Vagina (tissue), 2 donors: ENCODE measurements at regions of chr3 and their contacts with region 1.

Region 1: DNA sequence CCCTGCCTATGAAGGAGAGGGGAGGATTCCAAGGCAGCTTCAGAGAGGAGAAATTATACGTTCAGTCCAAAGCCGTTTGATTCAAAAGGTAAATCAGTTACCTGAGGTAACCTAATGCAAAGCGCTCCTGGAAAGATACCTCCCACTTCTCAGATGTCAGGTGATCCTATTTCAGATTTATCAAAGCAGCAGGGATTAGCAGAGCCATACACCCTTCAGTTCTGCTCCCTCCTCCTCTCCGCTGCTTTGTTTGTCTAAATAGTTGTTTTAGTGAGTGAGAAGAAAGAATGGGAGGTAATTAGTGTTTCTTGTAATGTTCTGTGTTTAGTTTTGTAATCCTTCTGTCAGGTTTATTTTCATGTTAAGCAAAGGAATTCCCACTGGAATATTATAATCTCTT is 81.1 kb downstream of the SOX14 start:
- DNase-seq: no peak
- H3K4me3 ChIP-seq: no peak overlapping the region
- H3K27ac ChIP-seq: no peak overlapping the region
- H3K4me1 ChIP-seq: no peaks in the 10 kb centered on the region
- H3K27me3 ChIP-seq: no peaks in the 10 kb centered on the region
- CTCF ChIP-seq: no peak
- POLR2A ChIP-seq: no peak

Region 2: DNA sequence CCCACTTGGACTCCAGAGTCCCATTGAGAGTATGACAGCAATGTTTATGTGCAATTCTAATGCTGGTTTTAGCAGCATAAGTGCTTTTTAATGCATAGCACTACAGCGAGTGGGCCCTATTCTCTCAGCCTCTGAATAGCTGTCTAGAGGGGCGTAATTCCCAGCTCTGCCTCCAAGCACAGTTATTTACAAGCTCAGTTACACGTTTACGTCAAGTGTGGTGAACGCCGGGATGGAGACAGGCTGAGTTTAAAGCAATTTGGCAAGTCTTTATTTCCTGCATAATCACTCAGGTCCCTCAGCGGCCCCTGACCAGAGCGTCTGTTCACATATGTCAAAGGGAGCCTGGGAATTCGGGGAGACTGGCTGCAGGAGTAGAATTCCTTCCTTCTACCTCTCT is 37.2 kb before region 1 on chr3:
- intact Hi-C with region 1: loop called (anchors 1 kb)
- DNase-seq: no peak
- H3K4me3 ChIP-seq: no peak overlapping the region
- H3K27ac ChIP-seq: no peak overlapping the region
- H3K4me1 ChIP-seq: no peaks in the 10 kb centered on the region
- H3K27me3 ChIP-seq: no peaks in the 10 kb centered on the region
- CTCF ChIP-seq: no peak
- POLR2A ChIP-seq: no peak